Common myeloid progenitor, CD34-positive (primary cell): ENCODE measurements at regions of chr9 and their contacts with region 1.

Region 1: GRCh38 chr9:136539427-136540421 is 6.1 kb downstream of the NOTCH1 start:
- DNase-seq: peak; percentile 91 to 96 (median 95)
- H3K4me3 ChIP-seq: peak overlapping the region in 5 of 7 experiments; percentile 40 to 70 (median 52)
- H3K27ac ChIP-seq: peak overlapping the region; percentile 46 to 84
- H3K4me1 ChIP-seq: peaks cover 0 to 95% (median 92%) of the 10 kb centered on the region in 4 experiments
- H3K27me3 ChIP-seq: no peaks in the 10 kb centered on the region

Region 2: GRCh38 chr9:136488247-136489214 is 51.2 kb before region 1 on chr9:
- CTCF ChIA-PET with region 1: interaction called, 93 read pairs
- POLR2A ChIA-PET with region 1: no interaction called
- DNase-seq: peak; percentile 40 to 56 (median 49)
- H3K4me3 ChIP-seq: no peak overlapping the region
- H3K27ac ChIP-seq: no peak overlapping the region
- H3K4me1 ChIP-seq: peaks cover 0 to 34% (median 21%) of the 10 kb centered on the region in 4 experiments
- H3K27me3 ChIP-seq: no peaks in the 10 kb centered on the region

Region 3: GRCh38 chr9:136527721-136528691 is 11.7 kb before region 1 on chr9:
- CTCF ChIA-PET with region 1: interaction called, 20 read pairs
- POLR2A ChIA-PET with region 1: interaction called, 58 read pairs
- DNase-seq: peak in 2 of 3 donors; percentile 51 to 65
- H3K4me3 ChIP-seq: peak overlapping the region in 1 of 7 experiments; percentile 64
- H3K27ac ChIP-seq: peak overlapping the region in 1 of 2 experiments; percentile 60
- H3K4me1 ChIP-seq: peaks cover 2 to 70% (median 57%) of the 10 kb centered on the region in 4 experiments
- H3K27me3 ChIP-seq: no peaks in the 10 kb centered on the region

Region 4: GRCh38 chr9:136551401-136552116 is 11.8 kb after region 1 on chr9:
- CTCF ChIA-PET with region 1: interaction called, 11 read pairs
- POLR2A ChIA-PET with region 1: interaction called, 5 read pairs
- DNase-seq: no peak
- H3K4me3 ChIP-seq: peak overlapping the region in 2 of 7 experiments; percentile 36 to 51
- H3K27ac ChIP-seq: peak overlapping the region; percentile 25 to 66
- H3K4me1 ChIP-seq: peaks cover 2 to 69% (median 64%) of the 10 kb centered on the region in 4 experiments
- H3K27me3 ChIP-seq: no peaks in the 10 kb centered on the region

Region 5: DNA sequence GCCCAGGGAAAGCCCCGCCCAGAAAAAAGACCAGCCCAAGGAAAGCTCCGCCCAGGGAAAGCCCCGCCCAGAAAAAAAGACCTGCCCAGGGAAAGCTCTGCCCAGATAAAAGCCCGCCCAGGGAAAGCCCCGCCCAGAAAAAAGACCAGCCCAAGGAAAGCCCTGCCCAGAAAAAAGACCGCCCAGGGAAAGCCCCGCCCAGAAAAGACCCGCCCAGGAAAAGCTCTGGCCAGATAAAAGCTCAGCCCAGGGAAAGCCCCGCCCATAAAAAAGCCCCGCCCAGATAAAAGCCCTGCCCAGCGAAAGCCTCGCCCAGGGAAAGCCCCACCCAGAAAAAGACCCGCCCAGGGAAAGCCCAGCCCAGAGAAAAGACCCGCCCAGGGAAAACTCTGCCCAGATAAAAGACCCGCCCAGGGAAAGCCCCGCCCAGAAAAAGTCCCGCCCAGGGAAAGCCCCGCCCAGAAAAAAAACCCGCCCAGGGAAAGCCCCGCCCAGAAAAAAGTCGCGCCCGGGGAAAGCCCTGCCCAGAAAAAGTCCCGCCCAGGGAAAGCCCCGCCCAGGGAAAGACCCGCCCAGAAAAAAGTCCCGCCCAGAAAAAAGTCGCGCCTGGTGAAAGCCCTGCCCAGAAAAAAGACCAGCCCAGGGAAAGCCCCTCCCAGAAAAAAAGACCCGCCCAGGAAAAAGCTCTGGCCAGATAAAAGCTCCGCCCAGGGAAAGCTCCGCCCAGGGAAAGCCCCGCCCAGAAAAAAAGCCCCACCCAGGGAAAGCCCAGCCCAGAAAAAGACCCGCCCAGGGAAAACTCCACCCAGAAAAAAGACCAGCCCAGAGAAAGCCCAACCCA is 611.1 kb after region 1 on chr9:
- CTCF ChIA-PET with region 1: no interaction called
- POLR2A ChIA-PET with region 1: no interaction called
- DNase-seq: peak in 2 of 3 donors; percentile 59 to 66
- H3K4me3 ChIP-seq: no peak overlapping the region
- H3K27ac ChIP-seq: no peak overlapping the region
- H3K4me1 ChIP-seq: no peaks in the 10 kb centered on the region
- H3K27me3 ChIP-seq: peaks cover 0 to 47% (median 6%) of the 10 kb centered on the region in 5 experiments